Mammary epithelial cell (primary cell): ENCODE measurements at regions of chr18 and their contacts with region 1.

Region 1: GRCh38 chr18:9683407-9684396 is 24.4 kb upstream of the RAB31 start:
- DNase-seq: peak; percentile 50
- H3K4me3 ChIP-seq: no peak overlapping the region
- H3K27ac ChIP-seq: no peak overlapping the region
- H3K4me1 ChIP-seq: peaks cover 6% of the 10 kb centered on the region
- H3K27me3 ChIP-seq: no peaks in the 10 kb centered on the region
- CTCF ChIP-seq: peak; percentile 36 to 59

Region 2: GRCh38 chr18:9206421-9206820 is 477.3 kb before region 1 on chr18:
- CTCF ChIA-PET with region 1: no interaction called
- dilution Hi-C with region 1: no loop called
- in situ Hi-C with region 1: no loop called
- intact Hi-C with region 1: no loop called
- DNase-seq: no peak
- H3K4me3 ChIP-seq: no peak overlapping the region
- H3K27ac ChIP-seq: no peak overlapping the region
- H3K4me1 ChIP-seq: no peaks in the 10 kb centered on the region
- H3K27me3 ChIP-seq: no peaks in the 10 kb centered on the region
- CTCF ChIP-seq: no peak

Region 3: DNA sequence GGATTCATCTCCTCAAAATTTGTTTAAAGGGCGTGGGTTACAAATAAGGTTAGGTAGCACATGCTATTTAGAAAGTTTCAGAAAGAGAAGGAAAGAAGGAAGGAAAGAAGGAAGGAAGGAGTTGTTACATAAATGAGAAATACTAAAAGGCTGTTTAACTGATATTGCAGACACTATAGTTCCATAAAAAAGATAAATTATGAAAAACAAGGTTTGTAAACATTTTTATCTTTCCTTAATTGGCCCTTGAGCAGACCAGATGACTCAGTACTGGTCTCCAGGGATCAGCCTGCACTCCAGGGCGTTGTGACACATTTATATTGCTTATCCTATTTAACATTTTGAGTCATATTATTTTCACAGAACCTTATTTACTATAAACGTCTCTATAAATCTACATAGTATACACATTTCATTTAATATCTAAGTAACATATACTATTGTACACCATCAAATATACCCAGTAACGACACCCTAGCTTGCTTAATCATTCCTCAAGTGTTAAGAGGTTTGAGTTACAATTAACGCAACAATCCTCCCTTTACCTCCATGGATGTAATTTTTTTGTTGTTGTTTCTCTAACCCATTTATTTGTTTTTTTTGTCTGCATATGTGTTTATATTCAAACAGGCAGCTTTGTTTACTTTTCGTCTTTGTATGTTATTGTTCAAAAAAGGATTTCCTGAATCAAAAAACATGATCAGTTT is 21.6 kb after region 1 on chr18:
- CTCF ChIA-PET with region 1: no interaction called
- dilution Hi-C with region 1: no loop called
- in situ Hi-C with region 1: no loop called
- intact Hi-C with region 1: loop called (anchors 2 kb)
- DNase-seq: no peak
- H3K4me3 ChIP-seq: no peak overlapping the region
- H3K27ac ChIP-seq: no peak overlapping the region
- H3K4me1 ChIP-seq: peaks cover 25% of the 10 kb centered on the region
- H3K27me3 ChIP-seq: no peaks in the 10 kb centered on the region
- CTCF ChIP-seq: no peak